Caco-2 (cell line): ENCODE measurements at regions of chr2 and their contacts with region 1.

Region 1: GRCh38 chr2:27079233-27080139 is 1.1 kb downstream of the EMILIN1 start:
- DNase-seq: no peak
- H3K4me3 ChIP-seq: no peak overlapping the region
- H3K4me3 Mint-ChIP-seq: no peak overlapping the region
- H3K27ac Mint-ChIP-seq: no peak overlapping the region
- H3K4me1 ChIP-seq: peaks cover 7% of the 10 kb centered on the region
- H3K4me1 Mint-ChIP-seq: peaks cover 10% of the 10 kb centered on the region
- H3K27me3 ChIP-seq: no peaks in the 10 kb centered on the region
- H3K27me3 Mint-ChIP-seq: peaks cover 15% of the 10 kb centered on the region
- CTCF ChIP-seq: no peak

Region 2: DNA sequence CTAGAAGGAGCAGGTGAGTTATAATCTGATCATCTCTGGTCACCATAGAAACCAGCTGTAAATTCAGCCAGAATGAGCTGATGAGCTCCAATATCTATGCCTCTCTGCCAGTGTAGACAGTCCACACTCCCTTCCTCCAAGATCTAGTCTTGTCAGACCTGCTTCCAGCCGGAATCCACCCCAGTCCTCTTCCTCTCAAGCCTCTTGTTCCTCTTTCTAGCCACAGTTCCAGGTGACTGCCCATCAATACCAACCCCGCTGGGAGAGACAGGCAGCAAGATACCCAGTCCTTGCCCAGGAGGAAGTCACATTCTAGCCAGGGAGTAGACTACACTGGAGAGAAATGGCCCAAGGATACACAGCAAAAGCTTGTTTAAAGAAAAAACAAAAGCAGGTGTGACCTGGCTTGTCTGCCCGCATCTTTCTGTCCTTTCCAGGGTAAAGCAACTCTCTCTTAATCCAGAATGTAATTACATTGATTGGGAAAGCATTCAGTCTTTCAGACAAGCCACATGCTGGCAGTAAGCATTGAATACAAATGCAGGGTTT is 324.4 kb before region 1 on chr2:
- CTCF ChIA-PET with region 1: no interaction called
- POLR2A ChIA-PET with region 1: no interaction called
- intact Hi-C with region 1: no loop called
- DNase-seq: no peak
- H3K4me3 ChIP-seq: no peak overlapping the region
- H3K4me3 Mint-ChIP-seq: no peak overlapping the region
- H3K27ac Mint-ChIP-seq: peak overlapping the region; percentile 37
- H3K4me1 ChIP-seq: peaks cover 58% of the 10 kb centered on the region
- H3K4me1 Mint-ChIP-seq: peaks cover 28% of the 10 kb centered on the region
- H3K27me3 ChIP-seq: no peaks in the 10 kb centered on the region
- H3K27me3 Mint-ChIP-seq: no peaks in the 10 kb centered on the region
- CTCF ChIP-seq: no peak

Region 3: GRCh38 chr2:27016801-27017325 is 62.6 kb before region 1 on chr2:
- CTCF ChIA-PET with region 1: interaction called, 3 read pairs
- POLR2A ChIA-PET with region 1: no interaction called
- intact Hi-C with region 1: loop called (anchors 2 kb)
- DNase-seq: peak; percentile 72 to 73
- H3K4me3 ChIP-seq: no peak overlapping the region
- H3K4me3 Mint-ChIP-seq: no peak overlapping the region
- H3K27ac Mint-ChIP-seq: no peak overlapping the region
- H3K4me1 ChIP-seq: peaks cover 31% of the 10 kb centered on the region
- H3K4me1 Mint-ChIP-seq: peaks cover 23% of the 10 kb centered on the region
- H3K27me3 ChIP-seq: no peaks in the 10 kb centered on the region
- H3K27me3 Mint-ChIP-seq: no peaks in the 10 kb centered on the region
- CTCF ChIP-seq: peak; percentile 64 to 85

Region 4: DNA sequence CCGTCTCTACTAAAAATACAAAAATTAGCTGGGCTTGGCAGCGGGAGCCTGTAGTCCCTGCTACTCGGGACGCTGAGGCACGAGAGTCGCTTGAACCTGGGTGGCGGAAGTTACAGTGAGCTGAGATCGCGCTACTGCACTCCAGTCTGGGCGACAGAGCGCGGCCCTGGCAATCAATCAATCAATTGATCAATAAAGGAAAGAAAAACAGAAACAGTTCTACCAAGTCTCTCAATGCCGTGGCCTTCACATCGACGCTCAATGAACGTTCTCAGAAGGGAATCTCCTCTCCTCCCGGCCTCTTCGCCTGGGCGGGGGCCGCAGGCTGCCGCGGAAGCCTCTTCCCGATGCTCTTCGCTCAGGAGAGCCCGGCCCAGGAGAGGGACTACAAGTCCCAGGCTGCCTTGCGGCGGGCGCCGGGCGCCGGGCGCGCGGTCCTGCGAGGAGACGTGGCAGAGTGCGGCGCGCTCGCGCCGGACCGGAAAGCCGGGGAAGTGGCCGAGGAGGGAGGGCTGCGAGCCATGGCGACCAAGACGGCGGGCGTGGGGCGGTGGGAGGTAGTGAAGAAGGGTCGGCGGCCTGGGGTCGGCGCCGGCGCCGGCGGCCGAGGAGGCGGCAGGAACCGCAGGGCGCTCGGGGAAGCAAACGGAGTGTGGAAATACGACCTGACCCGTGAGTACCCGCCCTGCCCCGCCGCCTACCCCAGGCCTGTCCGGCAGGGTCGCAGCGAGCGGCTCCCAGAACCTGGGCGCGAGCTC is 46.8 kb before region 1 on chr2 and contains the start of gene TMEM214:
- CTCF ChIA-PET with region 1: interaction called, 3 read pairs
- POLR2A ChIA-PET with region 1: no interaction called
- intact Hi-C with region 1: loop called (anchors 2 kb)
- DNase-seq: peak; percentile 90 to 93
- H3K4me3 ChIP-seq: peak within 1 kb of the TSS; percentile 92
- H3K4me3 Mint-ChIP-seq: peak within 1 kb of the TSS; percentile 98
- H3K27ac Mint-ChIP-seq: peak within 1 kb of the TSS; percentile 91
- H3K4me1 ChIP-seq: peaks cover 17% of the 10 kb centered on the region
- H3K4me1 Mint-ChIP-seq: peaks cover 7% of the 10 kb centered on the region
- H3K27me3 ChIP-seq: no peaks in the 10 kb centered on the region
- H3K27me3 Mint-ChIP-seq: no peaks in the 10 kb centered on the region
- CTCF ChIP-seq: peak in 1 of 2 experiments; percentile 29
- total RNA-seq, gene TMEM214: 85.0 and 85.4 TPM in 2 replicates

Region 5: GRCh38 chr2:27050281-27050995 is 29.0 kb before region 1 on chr2:
- CTCF ChIA-PET with region 1: interaction called, 5 read pairs
- POLR2A ChIA-PET with region 1: no interaction called
- intact Hi-C with region 1: loop called (anchors 1 kb)
- DNase-seq: peak; percentile 92 to 95
- H3K4me3 ChIP-seq: peak overlapping the region; percentile 96
- H3K4me3 Mint-ChIP-seq: peak overlapping the region; percentile 80
- H3K27ac Mint-ChIP-seq: peak overlapping the region; percentile 100
- H3K4me1 ChIP-seq: 0 out of 2 replicates have a peak, but pooled peaks cover 6% of the 10 kb centered on the region
- H3K4me1 Mint-ChIP-seq: peaks cover 31% of the 10 kb centered on the region
- H3K27me3 ChIP-seq: no peaks in the 10 kb centered on the region
- H3K27me3 Mint-ChIP-seq: peaks cover 10% of the 10 kb centered on the region
- CTCF ChIP-seq: peak; percentile 37 to 49

Region 6: GRCh38 chr2:27191053-27191829 is 111.8 kb after region 1 on chr2:
- CTCF ChIA-PET with region 1: interaction called, 10 read pairs
- POLR2A ChIA-PET with region 1: no interaction called
- intact Hi-C with region 1: no loop called
- DNase-seq: peak; percentile 73 to 82
- H3K4me3 ChIP-seq: no peak overlapping the region
- H3K4me3 Mint-ChIP-seq: no peak overlapping the region
- H3K27ac Mint-ChIP-seq: no peak overlapping the region
- H3K4me1 ChIP-seq: no peaks in the 10 kb centered on the region
- H3K4me1 Mint-ChIP-seq: no peaks in the 10 kb centered on the region
- H3K27me3 ChIP-seq: no peaks in the 10 kb centered on the region
- H3K27me3 Mint-ChIP-seq: no peaks in the 10 kb centered on the region
- CTCF ChIP-seq: peak; percentile 73 to 88

Region 7: GRCh38 chr2:27211829-27212627 is 132.5 kb after region 1 on chr2 and contains the starts of genes ATRAID and SLC5A6:
- CTCF ChIA-PET with region 1: interaction called, 10 read pairs
- POLR2A ChIA-PET with region 1: no interaction called
- intact Hi-C with region 1: no loop called
- DNase-seq: peak; percentile 92 to 96
- H3K4me3 ChIP-seq: peak within 1 kb of the TSS; percentile 58
- H3K4me3 Mint-ChIP-seq: peak within 1 kb of the TSS; percentile 98
- H3K27ac Mint-ChIP-seq: peak within 1 kb of the TSS; percentile 100
- H3K4me1 ChIP-seq: peaks cover 30% of the 10 kb centered on the region
- H3K4me1 Mint-ChIP-seq: peaks cover 29% of the 10 kb centered on the region
- H3K27me3 ChIP-seq: no peaks in the 10 kb centered on the region
- H3K27me3 Mint-ChIP-seq: no peaks in the 10 kb centered on the region
- CTCF ChIP-seq: no peak
- total RNA-seq, gene ATRAID: 150 and 157 TPM in 2 replicates
- total RNA-seq, gene SLC5A6: 93.7 and 98.2 TPM in 2 replicates